Sciatic nerve (tissue), 2 donors: ENCODE measurements at regions of chr1 and their contacts with region 1.

Region 1: GRCh38 chr1:43008115-43009060 is 49.7 kb upstream of the SLC2A1 start:
- DNase-seq: peak; percentile 73
- ATAC-seq: peak; percentile 92

Region 2: DNA sequence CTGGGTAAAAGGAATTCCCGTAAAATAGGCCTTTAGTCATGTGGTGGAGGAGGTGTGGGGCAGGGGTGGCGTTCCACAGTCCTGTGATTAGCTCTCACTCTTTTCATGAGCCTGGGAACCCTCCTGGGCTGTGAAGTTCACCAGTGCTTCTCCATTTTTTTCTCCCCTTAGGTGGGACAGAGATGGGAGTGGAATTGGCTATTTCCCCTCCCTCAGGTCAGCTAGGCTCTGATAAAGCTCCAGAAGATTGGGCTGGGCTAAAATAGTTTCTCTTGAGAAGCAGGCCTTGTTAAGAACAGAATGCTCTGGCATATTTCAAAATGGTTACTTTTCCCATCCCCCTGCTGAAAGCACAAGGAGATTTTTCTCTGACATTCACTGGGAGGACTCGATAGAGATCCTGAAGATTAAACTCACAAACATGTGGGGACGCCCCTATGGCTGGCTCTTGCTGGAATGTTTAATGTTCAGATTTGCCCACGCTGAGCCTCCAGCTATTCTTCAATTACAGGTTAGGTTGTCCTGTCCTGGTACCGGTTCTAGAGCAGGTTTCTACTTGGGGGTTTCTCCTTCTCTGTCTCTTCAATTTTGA is 16.2 kb before region 1 on chr1:
- intact Hi-C with region 1: loop called (anchors 1 kb)
- DNase-seq: no peak
- ATAC-seq: peak; percentile 22

Region 3: GRCh38 chr1:43238085-43238484 is 229.7 kb after region 1 on chr1:
- intact Hi-C with region 1: no loop called
- DNase-seq: peak; percentile 75
- ATAC-seq: peak; percentile 83